Activated naive CD4-positive, alpha-beta T cell treated with anti-CD3 and anti-CD28 coated beads, Interleukin-2, amount 10 ng/mL, durations not matched to agents 7 days and 5 days (primary cell): ENCODE measurements at regions of chr15 and their contacts with region 1.

Region 1: DNA sequence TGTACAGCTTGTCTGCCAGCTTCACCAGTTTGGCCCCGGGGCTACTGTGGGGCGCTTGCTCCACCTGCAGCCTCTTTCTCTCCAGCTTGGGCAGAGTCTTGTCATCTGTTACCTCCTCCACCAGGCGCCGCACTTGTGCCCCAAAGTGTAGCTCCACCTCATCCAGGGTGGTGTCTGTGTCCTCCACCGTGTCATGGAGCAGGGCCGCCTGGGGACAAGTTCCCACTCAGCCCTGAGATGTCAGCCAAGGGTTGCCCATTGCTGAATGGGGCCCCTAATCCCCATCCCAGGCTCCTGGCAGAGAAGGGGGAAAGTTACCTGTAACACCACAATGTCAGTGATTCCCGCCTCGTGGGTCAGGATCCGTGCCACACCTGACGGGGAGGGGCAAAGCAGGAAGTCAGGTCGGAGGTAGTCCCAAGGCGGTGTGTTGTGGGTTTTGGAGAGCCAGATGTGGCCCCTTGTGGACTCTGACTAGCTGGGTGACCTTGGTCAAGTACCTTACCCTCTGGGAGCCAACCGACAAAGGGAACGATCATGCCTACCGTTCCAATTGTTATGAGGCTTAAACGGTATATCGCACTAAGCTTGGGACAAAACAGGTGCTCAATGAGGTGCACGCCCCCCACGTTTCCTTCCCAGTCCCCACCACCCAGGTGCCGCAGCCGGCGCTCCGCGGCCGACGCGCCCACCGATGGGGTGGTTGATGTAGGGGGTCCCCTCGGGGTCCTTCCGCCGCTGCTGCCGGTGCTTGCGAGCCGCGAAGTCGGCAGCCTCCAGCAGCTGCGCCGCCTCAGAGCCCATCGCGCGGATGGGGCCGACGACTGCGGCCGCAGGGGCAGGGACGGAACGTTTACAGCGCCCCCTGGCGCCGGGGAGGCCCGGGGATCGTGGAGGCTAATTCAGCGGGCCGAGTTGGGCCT is at the start of gene HDDC3:
- DNase-seq: peak; percentile 93
- H3K4me3 Mint-ChIP-seq: peak within 1 kb of the TSS; percentile 98
- H3K27ac Mint-ChIP-seq: peak within 1 kb of the TSS; percentile 100
- H3K4me1 Mint-ChIP-seq: peaks cover 70% of the 10 kb centered on the region
- H3K27me3 Mint-ChIP-seq: no peaks in the 10 kb centered on the region

Region 2: GRCh38 chr15:90648137-90649070 is 283.6 kb before region 1 on chr15:
- CTCF ChIA-PET with region 1: interaction called, 35 read pairs
- DNase-seq: peak; percentile 83
- H3K4me3 Mint-ChIP-seq: peak overlapping the region; percentile 29
- H3K27ac Mint-ChIP-seq: peak overlapping the region; percentile 97
- H3K4me1 Mint-ChIP-seq: peaks cover 51% of the 10 kb centered on the region
- H3K27me3 Mint-ChIP-seq: peaks cover 9% of the 10 kb centered on the region

Region 3: DNA sequence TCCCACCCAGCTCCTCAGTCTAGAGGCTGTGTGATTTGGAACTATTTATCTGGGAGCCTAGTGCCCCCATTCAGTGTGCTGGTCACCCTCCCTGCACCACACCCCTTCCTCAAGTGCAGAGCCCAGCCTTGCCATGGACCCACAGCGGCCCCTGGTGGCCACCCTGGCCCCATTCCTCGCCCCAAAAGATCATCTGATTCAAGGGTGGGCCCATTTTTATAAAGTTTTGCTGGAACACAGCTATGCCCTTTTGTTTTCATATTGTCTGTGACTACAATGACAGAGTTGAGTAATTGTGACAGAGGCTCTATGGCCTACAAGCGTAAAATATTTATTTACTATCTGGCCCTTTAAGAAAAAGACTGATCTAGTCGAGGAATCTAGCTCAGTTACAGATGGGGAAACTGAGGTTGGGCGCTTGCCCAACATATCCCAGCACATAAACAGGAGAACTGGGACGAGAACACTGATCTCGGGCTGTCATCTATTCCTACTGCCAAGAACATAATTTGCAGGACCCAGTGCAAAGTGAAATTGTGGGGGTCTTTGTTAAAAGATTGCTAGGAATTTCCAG is 45.9 kb before region 1 on chr15:
- CTCF ChIA-PET with region 1: interaction called, 36 read pairs
- DNase-seq: peak; percentile 87
- H3K4me3 Mint-ChIP-seq: peak overlapping the region; percentile 26
- H3K27ac Mint-ChIP-seq: peak overlapping the region; percentile 82
- H3K4me1 Mint-ChIP-seq: peaks cover 32% of the 10 kb centered on the region
- H3K27me3 Mint-ChIP-seq: no peaks in the 10 kb centered on the region

Region 4: DNA sequence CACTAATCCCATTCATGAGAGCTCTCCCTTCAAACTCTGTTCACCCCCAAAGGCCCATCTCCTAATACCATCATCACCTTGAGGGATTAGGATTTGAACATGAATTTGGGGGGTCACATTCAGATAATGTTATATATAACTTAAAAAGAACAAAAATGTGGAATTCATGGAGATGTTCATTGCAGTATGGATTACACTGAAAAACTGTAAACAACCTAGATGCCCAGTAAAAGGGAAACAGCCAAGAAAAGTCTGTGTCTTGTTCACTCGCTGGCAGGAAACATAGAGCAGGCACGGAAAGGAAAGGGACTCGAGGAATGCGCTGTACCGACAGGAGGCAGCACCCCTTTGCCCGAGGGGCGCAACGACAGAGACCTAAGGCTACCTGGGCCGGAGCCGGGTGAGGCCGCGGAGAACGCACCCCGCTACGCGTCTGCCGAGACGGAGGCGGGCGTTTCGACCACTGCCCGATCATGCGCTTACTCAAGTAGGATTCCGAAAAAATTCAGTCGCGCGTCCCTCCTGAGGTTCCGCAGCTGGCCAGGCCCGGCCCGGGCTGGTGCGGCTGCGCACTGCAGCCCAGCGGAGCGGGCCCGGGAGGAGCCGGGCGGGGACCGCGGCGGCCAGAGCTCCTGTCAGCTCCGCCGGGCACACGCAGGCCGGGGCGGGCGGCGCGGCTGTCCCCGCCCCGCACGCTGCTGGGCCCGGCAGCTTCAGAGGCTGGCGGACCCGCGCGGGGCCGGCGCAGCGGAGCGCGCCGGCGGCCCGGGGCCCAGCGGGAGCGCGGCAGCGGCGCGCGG is 29.8 kb before region 1 on chr15:
- CTCF ChIA-PET with region 1: interaction called, 160 read pairs
- DNase-seq: peak; percentile 81
- H3K4me3 Mint-ChIP-seq: peak overlapping the region; percentile 86
- H3K27ac Mint-ChIP-seq: peak overlapping the region; percentile 94
- H3K4me1 Mint-ChIP-seq: peaks cover 35% of the 10 kb centered on the region
- H3K27me3 Mint-ChIP-seq: peaks cover 4% of the 10 kb centered on the region

Region 5: DNA sequence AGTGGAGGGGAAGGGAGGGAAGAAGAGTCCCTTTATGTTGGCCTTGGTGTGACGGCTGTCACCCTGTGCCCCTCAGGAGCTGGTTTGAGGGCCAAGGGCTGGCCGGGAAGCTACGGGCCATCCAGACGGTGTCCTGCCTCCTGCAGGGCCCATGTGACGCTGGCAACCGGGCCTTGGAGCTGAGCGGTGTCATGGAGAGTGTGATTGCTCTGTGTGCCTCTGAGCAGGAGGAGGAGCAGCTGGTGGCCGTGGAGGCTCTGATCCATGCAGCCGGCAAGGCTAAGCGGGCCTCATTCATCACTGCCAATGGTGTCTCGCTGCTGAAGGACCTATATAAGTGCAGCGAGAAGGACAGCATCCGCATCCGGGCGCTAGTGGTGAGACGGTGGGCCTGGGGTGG is 14.5 kb after region 1 on chr15:
- CTCF ChIA-PET with region 1: interaction called, 16 read pairs
- DNase-seq: no peak
- H3K4me3 Mint-ChIP-seq: no peak overlapping the region
- H3K27ac Mint-ChIP-seq: no peak overlapping the region
- H3K4me1 Mint-ChIP-seq: no peaks in the 10 kb centered on the region
- H3K27me3 Mint-ChIP-seq: no peaks in the 10 kb centered on the region